Activated CD4-positive, alpha-beta T cell treated with anti-CD3 and anti-CD28 coated beads, Interleukin-2, amount 10 ng/mL, durations not matched to agents 24 days and 14 days (primary cell): ENCODE measurements at regions of chr19 and their contacts with region 1.

Region 1: GRCh38 chr19:8194528-8195267 is 14.5 kb upstream of the CERS4 start:
- DNase-seq: peak; percentile 87
- H3K4me3 Mint-ChIP-seq: peak overlapping the region; percentile 64
- H3K27ac Mint-ChIP-seq: peak overlapping the region; percentile 97
- H3K4me1 Mint-ChIP-seq: peaks cover 44% of the 10 kb centered on the region
- H3K27me3 Mint-ChIP-seq: no peaks in the 10 kb centered on the region

Region 2: GRCh38 chr19:8174706-8175105 is 20.0 kb before region 1 on chr19:
- intact Hi-C with region 1: no loop called
- DNase-seq: no peak
- H3K4me3 Mint-ChIP-seq: no peak overlapping the region
- H3K27ac Mint-ChIP-seq: no peak overlapping the region
- H3K4me1 Mint-ChIP-seq: no peaks in the 10 kb centered on the region
- H3K27me3 Mint-ChIP-seq: no peaks in the 10 kb centered on the region

Region 3: DNA sequence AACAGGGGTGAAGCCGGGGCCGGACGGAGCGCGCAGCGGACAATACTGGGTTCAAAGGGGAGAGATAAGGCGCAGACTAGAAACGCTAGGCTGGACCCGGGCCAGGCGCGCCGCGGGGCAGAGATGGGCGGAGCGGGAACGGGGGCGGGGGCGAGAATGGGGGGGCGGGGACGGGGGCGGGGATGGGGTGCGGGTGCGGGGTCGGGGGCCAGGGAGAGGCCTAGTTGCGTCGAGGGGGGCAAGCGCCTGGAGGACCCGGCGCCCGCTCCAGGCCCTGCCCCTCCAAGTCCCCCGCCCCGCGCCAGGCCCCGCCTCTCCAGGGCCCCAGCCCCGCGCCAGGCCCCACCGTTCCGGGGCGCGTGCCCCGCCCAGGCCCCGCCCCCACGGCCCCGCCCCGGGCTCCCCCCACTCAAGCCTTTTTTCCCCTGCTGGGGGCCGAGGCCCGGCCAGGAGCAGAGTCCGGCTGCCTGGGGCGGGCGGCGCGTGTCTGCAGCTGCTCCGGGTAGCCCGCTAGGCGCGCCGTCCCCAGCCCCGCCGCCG is 14.3 kb after region 1 on chr19 and contains the start of gene CERS4:
- intact Hi-C with region 1: loop called (anchors 2 kb)
- DNase-seq: peak; percentile 91
- H3K4me3 Mint-ChIP-seq: peak within 1 kb of the TSS; percentile 88
- H3K27ac Mint-ChIP-seq: peak within 1 kb of the TSS; percentile 80
- H3K4me1 Mint-ChIP-seq: peaks cover 24% of the 10 kb centered on the region
- H3K27me3 Mint-ChIP-seq: peaks cover 5% of the 10 kb centered on the region
- total RNA-seq, gene CERS4: 30.3 and 30.6 TPM in 2 replicates